ENCODE measurements at regions of chr20 and their contacts with region 1.

Region 1: DNA sequence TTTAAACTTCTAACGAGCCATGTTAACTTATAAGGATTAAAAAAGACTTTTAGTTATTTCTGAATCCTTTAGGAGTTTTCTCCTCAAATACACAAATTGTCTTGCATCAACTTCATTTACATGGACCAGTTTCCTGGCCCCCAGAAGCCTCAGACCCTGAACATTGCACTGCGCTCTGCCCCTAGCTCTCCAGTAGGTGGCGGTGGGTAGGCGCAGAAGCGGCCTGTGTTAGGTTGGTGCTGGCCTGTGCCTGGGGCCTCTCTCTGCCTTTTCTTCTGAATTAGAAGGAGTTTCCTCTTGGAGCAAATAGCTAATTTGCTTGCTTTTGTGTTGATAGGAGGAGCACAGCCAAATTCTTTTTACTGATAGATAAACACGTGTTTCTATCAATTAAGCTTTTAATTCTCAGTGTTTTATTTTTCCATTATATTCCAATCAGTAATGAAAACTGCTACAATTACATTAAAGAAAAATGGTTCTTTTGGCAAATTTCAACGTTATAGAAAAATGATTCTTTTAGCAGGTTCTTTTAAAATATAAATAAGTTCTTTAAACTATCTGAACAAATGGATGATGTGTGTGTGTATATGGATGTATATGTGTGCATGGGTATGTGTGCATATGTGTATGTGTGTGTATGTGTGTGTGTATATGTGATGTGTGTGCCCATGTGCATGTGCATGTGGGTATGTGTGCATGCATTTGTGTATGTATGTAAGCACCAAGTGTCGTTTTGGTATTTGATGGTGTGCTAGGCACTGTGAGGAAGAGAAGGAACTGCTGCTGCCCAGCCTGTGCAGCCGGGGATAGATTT is 44.5 kb downstream of the DTD1 start:
- DNase-seq: peak; percentile 67
- ATAC-seq: peak; percentile 98
- H3K4me3 ChIP-seq: no peak overlapping the region
- H3K27ac ChIP-seq: no peak overlapping the region
- H3K4me1 ChIP-seq: no peaks in the 10 kb centered on the region
- H3K27me3 ChIP-seq: no peaks in the 10 kb centered on the region
- CTCF ChIP-seq: peak; percentile 99

Region 2: GRCh38 chr20:18793625-18794427 is 161.4 kb after region 1 on chr20:
- CTCF ChIA-PET with region 1: no interaction called
- POLR2A ChIA-PET with region 1: no interaction called
- intact Hi-C with region 1: loop called (anchors 5 kb)
- DNase-seq: peak; percentile 91
- ATAC-seq: peak; percentile 98
- H3K4me3 ChIP-seq: peak overlapping the region; percentile 83
- H3K27ac ChIP-seq: no peak overlapping the region
- H3K4me1 ChIP-seq: peaks cover 6% of the 10 kb centered on the region
- H3K27me3 ChIP-seq: peaks cover 23% of the 10 kb centered on the region
- CTCF ChIP-seq: peak; percentile 29; the same call in 1 of the 2 replicates

Region 3: GRCh38 chr20:19205977-19206396 is 573.6 kb after region 1 on chr20:
- CTCF ChIA-PET with region 1: interaction called, 4 read pairs
- POLR2A ChIA-PET with region 1: no interaction called
- intact Hi-C with region 1: loop called (anchors 5 kb)
- DNase-seq: peak; percentile 74
- ATAC-seq: peak; percentile 53; the same call in 1 of the 2 replicates
- H3K4me3 ChIP-seq: no peak overlapping the region
- H3K27ac ChIP-seq: no peak overlapping the region
- H3K4me1 ChIP-seq: no peaks in the 10 kb centered on the region
- H3K27me3 ChIP-seq: peaks cover 65% of the 10 kb centered on the region
- CTCF ChIP-seq: peak; percentile 98

Measured in PC-3 (cell line).